AG04449 (cell line): ENCODE measurements at regions of chr1 and their contacts with region 1.

Region 1: GRCh38 chr1:226634166-226634588 is 85.6 kb downstream of the STUM start:
- DNase-seq: no peak
- H3K4me3 ChIP-seq: no peak overlapping the region
- CTCF ChIP-seq: peak; percentile 93

Region 2: DNA sequence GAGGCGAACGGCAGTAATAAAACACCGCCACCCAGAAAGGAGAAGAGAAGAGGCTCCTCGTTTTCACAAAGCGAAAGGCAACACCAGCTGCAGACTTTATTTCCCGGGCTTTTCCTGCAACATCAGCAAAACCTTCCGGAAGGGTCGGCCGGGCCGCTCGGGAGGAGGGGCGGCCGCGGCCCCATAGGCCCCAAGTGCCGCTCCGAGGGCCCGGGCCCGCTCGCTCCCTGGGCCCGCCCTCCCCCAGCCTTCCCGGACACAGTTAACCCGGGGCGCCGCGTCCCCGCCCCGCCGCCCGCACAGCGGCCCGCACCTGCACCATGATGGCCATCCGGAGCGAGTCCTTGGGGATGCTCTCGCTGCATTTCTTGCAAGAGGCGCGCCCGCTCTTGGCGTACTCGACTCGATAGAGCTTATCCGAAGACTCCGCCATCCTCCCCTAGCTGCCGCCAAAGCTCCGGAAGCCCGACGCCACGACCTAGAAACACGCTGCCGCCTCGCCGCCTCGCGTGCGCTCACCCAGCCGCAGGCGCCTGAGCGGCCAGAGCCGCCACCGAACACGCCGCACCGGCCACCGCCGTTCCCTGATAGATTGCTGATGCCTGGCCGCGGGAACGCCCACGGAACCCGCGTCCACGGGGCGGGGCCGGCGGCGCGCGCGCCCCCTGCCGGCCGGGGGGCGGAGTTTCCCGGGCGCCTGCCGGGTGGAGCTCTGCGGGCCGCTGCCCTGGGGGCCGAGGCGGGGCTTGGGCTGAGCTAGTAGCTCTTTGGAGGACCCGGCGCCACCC is 226.5 kb before region 1 on chr1 and contains the start of gene PARP1:
- CTCF ChIA-PET with region 1: no interaction called
- POLR2A ChIA-PET with region 1: no interaction called
- DNase-seq: no peak
- H3K4me3 ChIP-seq: peak within 1 kb of the TSS; percentile 76
- CTCF ChIP-seq: peak; percentile 36

Region 3: DNA sequence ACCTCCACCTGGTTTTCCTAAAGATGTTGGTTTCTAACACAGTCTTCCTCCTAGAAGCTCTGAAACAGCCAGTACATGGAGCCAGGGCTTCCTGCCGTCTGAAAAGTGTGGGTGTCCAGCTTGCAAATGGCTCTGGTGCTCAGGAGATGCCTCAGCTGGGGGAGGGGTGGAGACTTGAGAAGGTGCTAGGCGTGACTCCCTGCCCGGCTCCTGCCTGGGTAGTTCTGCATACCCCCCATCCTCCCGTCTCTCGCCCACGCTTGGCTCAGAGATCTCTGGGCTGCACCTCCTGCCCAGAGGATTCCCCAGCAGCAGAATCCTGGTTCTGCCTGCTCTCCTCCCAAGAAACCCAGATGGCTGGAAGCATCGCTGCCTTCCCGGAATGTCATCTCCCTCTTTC is 68.7 kb before region 1 on chr1:
- CTCF ChIA-PET with region 1: no interaction called
- POLR2A ChIA-PET with region 1: no interaction called
- DNase-seq: no peak
- H3K4me3 ChIP-seq: no peak overlapping the region
- CTCF ChIP-seq: no peak

Region 4: GRCh38 chr1:226649780-226650179 is 15.6 kb after region 1 on chr1:
- CTCF ChIA-PET with region 1: interaction called, 34 read pairs
- POLR2A ChIA-PET with region 1: interaction called, 3 read pairs
- DNase-seq: no peak
- H3K4me3 ChIP-seq: no peak overlapping the region
- CTCF ChIP-seq: peak; percentile 11

Region 5: DNA sequence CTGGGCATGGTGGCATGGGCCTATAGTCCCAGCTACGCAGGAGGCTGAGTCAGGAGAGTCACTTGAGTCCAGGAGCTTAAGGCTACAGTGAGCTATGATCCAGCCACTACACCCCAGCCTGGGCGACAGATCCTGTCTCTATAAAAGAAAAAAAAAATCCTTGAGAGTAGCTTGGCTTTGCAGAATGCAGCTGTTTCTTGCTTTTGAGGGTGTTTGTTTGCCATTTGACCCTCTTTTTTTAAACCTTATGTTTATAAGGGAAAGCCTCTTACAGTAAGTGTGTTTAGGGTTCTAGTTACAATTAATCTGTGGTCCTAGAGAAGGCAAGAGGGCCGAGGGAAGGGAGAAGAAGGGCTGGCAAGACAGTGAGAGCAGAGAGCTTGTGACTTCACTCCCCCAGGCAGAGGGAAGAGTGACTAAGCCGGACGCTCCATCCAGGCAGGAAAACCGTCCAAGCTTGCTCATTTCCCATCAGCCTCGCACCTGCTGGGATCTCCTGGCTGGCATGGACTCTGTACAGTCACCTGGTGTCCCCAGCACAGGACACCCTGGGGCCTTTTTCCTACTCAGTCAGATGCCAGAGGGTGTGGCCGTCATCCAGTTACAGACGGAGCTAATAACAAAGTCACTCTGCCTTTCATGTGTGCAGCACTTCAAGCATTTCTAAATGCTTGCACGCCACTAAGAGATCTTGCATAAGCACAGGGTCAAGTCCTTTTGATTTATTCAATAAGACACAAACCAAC is 180.7 kb after region 1 on chr1:
- CTCF ChIA-PET with region 1: interaction called, 424 read pairs
- POLR2A ChIA-PET with region 1: no interaction called
- DNase-seq: peak; percentile 12
- H3K4me3 ChIP-seq: no peak overlapping the region
- CTCF ChIP-seq: no peak